ENCODE measurements at regions of chr15 and their contacts with region 1.

Region 1: GRCh38 chr15:53918180-53919042 is 59.8 kb upstream of the UNC13C start:
- DNase-seq: no peak
- H3K4me3 ChIP-seq: no peak overlapping the region
- H3K27ac ChIP-seq: no peak overlapping the region
- H3K4me1 ChIP-seq: no peaks in the 10 kb centered on the region
- H3K27me3 ChIP-seq: no peaks in the 10 kb centered on the region
- CTCF ChIP-seq: no peak
- POLR2A ChIP-seq: no peak

Region 2: DNA sequence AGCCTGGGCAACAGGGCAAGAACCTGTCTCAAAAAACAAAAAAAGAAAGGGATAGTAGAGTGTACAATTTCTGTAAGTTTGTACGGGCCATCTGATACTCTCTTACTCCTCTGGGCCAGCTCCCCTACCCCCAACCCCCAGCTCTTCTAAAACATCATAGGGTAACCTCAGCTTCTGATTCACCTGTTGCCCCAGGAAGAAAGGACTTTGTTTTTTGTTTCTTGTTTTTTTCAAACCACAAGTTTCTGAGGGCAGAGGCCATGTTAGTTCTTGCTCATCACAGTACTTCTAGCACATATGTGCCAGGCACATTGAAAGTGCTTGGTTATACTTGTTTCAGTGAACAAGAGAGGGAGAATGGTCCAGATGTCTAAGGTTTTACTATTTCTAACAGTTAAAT is 1259.5 kb before region 1 on chr15:
- intact Hi-C with region 1: loop called (anchors 5 kb)
- DNase-seq: no peak
- H3K4me3 ChIP-seq: no peak overlapping the region
- H3K27ac ChIP-seq: no peak overlapping the region
- H3K4me1 ChIP-seq: peaks cover 32% of the 10 kb centered on the region
- H3K27me3 ChIP-seq: no peaks in the 10 kb centered on the region
- CTCF ChIP-seq: no peak
- POLR2A ChIP-seq: no peak